Calu3 (cell line): ENCODE measurements at regions of chr2 and their contacts with region 1.

Region 1: DNA sequence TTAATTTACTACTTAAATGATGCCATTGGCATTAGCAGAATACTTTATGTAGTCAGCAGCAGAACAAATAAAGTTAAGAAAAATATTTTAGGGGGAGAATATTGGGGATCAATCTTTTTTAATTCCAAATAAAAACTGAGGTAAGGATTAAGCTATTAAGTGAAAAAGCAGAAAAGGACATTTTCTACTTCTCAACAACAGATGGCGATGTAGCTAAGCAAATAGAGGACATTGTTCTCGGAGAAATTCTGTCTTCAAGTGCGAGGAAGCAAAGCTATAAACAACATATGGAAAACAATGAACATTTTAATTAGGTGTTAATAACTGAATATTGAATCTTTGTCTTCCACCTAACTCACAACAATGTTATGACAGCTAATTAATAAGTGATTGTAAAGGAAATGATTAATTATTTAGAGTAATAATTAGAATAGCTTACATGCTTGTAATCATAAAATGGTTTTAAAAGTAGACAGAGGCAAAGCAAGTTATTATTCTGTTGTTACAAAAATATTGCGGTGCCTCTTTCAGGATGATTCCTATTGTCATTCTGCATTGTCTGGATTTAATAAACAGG is 32.9 kb upstream of the CCDC93 start:
- DNase-seq: no peak
- H3K4me3 Mint-ChIP-seq: peak overlapping the region; percentile 9
- H3K27ac Mint-ChIP-seq: peak overlapping the region; percentile 30
- H3K4me1 Mint-ChIP-seq: peaks cover 67% of the 10 kb centered on the region
- H3K27me3 Mint-ChIP-seq: no peaks in the 10 kb centered on the region
- CTCF ChIP-seq: peak; percentile 38

Region 2: GRCh38 chr2:118077636-118078247 is 31.0 kb after region 1 on chr2:
- CTCF ChIA-PET with region 1: interaction called, 12 read pairs
- intact Hi-C with region 1: no loop called
- DNase-seq: no peak
- H3K4me3 Mint-ChIP-seq: no peak overlapping the region
- H3K27ac Mint-ChIP-seq: no peak overlapping the region
- H3K4me1 Mint-ChIP-seq: peaks cover 45% of the 10 kb centered on the region
- H3K27me3 Mint-ChIP-seq: no peaks in the 10 kb centered on the region
- CTCF ChIP-seq: no peak

Region 3: GRCh38 chr2:118122594-118123281 is 76.0 kb after region 1 on chr2:
- CTCF ChIA-PET with region 1: interaction called, 5 read pairs
- intact Hi-C with region 1: loop called (anchors 2 kb)
- DNase-seq: peak; percentile 58
- H3K4me3 Mint-ChIP-seq: peak overlapping the region; percentile 61
- H3K27ac Mint-ChIP-seq: peak overlapping the region; percentile 99
- H3K4me1 Mint-ChIP-seq: peaks cover 74% of the 10 kb centered on the region
- H3K27me3 Mint-ChIP-seq: no peaks in the 10 kb centered on the region
- CTCF ChIP-seq: no peak

Region 4: GRCh38 chr2:118202707-118203303 is 156.1 kb after region 1 on chr2:
- CTCF ChIA-PET with region 1: no interaction called
- intact Hi-C with region 1: loop called (anchors 2 kb)
- DNase-seq: peak; percentile 59
- H3K4me3 Mint-ChIP-seq: no peak overlapping the region
- H3K27ac Mint-ChIP-seq: no peak overlapping the region
- H3K4me1 Mint-ChIP-seq: peaks cover 8% of the 10 kb centered on the region
- H3K27me3 Mint-ChIP-seq: no peaks in the 10 kb centered on the region
- CTCF ChIP-seq: peak; percentile 86

Region 5: GRCh38 chr2:118855451-118856279 is 808.9 kb after region 1 on chr2:
- CTCF ChIA-PET with region 1: interaction called, 16 read pairs
- intact Hi-C with region 1: loop called (anchors 5 kb)
- DNase-seq: peak; percentile 93
- H3K4me3 Mint-ChIP-seq: peak overlapping the region; percentile 72
- H3K27ac Mint-ChIP-seq: no peak overlapping the region
- H3K4me1 Mint-ChIP-seq: no peaks in the 10 kb centered on the region
- H3K27me3 Mint-ChIP-seq: peaks cover 12% of the 10 kb centered on the region
- CTCF ChIP-seq: peak; percentile 91